A673 (cell line): ENCODE measurements at regions of chr3 and their contacts with region 1.

Region 1: DNA sequence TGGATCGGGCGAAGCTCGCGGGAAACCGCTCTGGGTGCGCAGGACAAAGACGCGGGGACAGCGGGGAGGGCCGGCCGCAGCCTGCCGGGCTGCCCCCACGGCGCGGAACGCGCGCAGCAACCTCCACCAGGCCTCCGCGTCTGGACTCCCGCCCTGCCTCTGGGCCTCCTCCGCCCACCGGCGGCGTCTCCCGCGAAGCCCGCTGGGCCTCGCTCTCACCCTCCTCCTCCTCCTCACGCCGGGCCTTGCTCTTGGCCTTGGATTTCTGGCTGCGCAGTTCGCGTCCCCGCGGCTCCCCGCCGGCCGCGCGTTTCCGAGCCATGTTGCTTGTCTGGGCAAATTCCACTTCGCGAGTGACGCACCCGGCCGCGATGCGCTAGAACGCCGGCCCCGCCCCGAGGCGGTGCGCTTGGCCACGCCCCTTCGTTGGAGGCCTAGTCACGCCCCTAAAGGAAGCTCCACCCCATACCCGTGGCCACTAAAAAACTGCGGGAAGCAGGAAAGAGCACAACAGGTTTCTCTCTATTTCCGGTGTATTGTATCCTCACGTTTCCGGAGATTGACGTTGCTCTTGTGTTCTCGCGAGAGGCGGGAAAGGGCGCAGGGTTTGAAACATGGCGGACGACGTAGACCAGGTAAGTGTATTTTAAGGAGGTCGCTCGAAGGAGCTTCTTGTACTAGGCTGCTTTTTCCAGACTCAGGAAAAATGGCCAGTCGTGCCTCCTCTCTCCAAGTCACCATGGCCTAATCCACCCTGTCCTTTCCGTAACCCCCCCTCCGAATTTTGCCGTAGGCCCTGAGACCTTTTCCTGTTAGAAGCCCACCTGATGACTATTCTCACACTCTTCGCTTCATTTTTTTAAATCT is at the starts of genes LSM3 and XPC:
- DNase-seq: peak; percentile 99
- H3K4me3 ChIP-seq: peak within 1 kb of the TSS; percentile 62
- H3K27ac ChIP-seq: peak within 1 kb of the TSS; percentile 94
- H3K4me1 ChIP-seq: peaks cover 16% of the 10 kb centered on the region
- H3K27me3 ChIP-seq: no peaks in the 10 kb centered on the region
- CTCF ChIP-seq: no peak
- total RNA-seq, gene LSM3: 24.3 and 29.4 TPM in 2 replicates
- total RNA-seq, gene XPC: 57.2 and 58.2 TPM in 2 replicates

Region 2: GRCh38 chr3:14096745-14097144 is 81.7 kb before region 1 on chr3:
- CTCF ChIA-PET with region 1: no interaction called
- POLR2A ChIA-PET with region 1: no interaction called
- intact Hi-C with region 1: no loop called
- DNase-seq: no peak
- H3K4me3 ChIP-seq: no peak overlapping the region
- H3K27ac ChIP-seq: no peak overlapping the region
- H3K4me1 ChIP-seq: no peaks in the 10 kb centered on the region
- H3K27me3 ChIP-seq: no peaks in the 10 kb centered on the region
- CTCF ChIP-seq: no peak

Region 3: DNA sequence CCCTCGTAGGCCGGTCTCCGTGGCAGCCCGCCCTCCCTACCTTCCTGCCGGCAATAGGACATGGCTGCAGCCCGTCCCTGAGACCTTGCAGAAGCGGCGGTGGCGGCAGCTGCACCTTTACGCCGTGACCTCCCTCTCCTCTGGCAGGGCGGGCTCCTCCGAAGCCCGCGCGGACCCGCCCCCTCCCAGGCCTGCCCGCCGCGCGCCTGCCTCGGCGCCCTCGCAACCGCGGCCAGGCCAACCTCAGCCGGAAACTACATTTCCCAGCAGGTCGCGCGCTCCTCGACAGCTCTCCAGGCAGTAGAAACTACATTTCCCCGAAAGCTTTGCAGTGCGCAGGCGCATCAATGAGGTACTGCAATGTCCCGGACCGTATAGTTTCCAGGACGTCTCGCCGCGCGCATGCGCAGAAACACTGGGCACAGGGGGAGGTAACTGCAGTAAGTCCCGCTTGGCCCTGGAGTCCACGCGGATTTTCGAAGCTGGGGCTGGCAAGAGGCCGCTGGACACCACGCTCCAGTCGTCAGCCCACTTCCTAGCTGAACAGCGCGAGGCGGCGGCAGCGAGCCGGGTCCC is 53.8 kb before region 1 on chr3 and contains the starts of genes CHCHD4 and TMEM43:
- CTCF ChIA-PET with region 1: no interaction called
- POLR2A ChIA-PET with region 1: no interaction called
- intact Hi-C with region 1: loop called (anchors 5 kb)
- DNase-seq: peak; percentile 99
- H3K4me3 ChIP-seq: peak within 1 kb of the TSS; percentile 90
- H3K27ac ChIP-seq: peak within 1 kb of the TSS; percentile 83
- H3K4me1 ChIP-seq: peaks cover 19% of the 10 kb centered on the region
- H3K27me3 ChIP-seq: no peaks in the 10 kb centered on the region
- CTCF ChIP-seq: no peak
- total RNA-seq, gene CHCHD4: 30.3 and 33.5 TPM in 2 replicates
- total RNA-seq, gene TMEM43: 50.8 and 55.6 TPM in 2 replicates

Region 4: GRCh38 chr3:15753056-15753710 is 1574.7 kb after region 1 on chr3:
- CTCF ChIA-PET with region 1: no interaction called
- POLR2A ChIA-PET with region 1: no interaction called
- intact Hi-C with region 1: no loop called
- DNase-seq: no peak
- H3K4me3 ChIP-seq: no peak overlapping the region
- H3K27ac ChIP-seq: no peak overlapping the region
- H3K4me1 ChIP-seq: peaks cover 4% of the 10 kb centered on the region
- H3K27me3 ChIP-seq: no peaks in the 10 kb centered on the region
- CTCF ChIP-seq: no peak